ENCODE measurements at regions of chr10 and their contacts with region 1.

Region 1: GRCh38 chr10:58291538-58292174 is 22.7 kb downstream of the CISD1 start:
- DNase-seq: no peak
- H3K4me3 ChIP-seq: no peak overlapping the region
- H3K27ac ChIP-seq: no peak overlapping the region
- H3K4me1 ChIP-seq: no peaks in the 10 kb centered on the region
- H3K27me3 ChIP-seq: no peaks in the 10 kb centered on the region
- CTCF ChIP-seq: peak; percentile 79

Region 2: GRCh38 chr10:58177362-58177947 is 114.2 kb before region 1 on chr10:
- intact Hi-C with region 1: loop called (anchors 2 kb)
- DNase-seq: no peak
- H3K4me3 ChIP-seq: no peak overlapping the region
- H3K27ac ChIP-seq: no peak overlapping the region
- H3K4me1 ChIP-seq: no peaks in the 10 kb centered on the region
- H3K27me3 ChIP-seq: no peaks in the 10 kb centered on the region
- CTCF ChIP-seq: peak; percentile 75